ENCODE measurements at regions of chr2 and their contacts with region 1.

Region 1: GRCh38 chr2:85826990-85827878 is 61.6 kb downstream of the ST3GAL5 start:
- DNase-seq: peak; percentile 90
- ATAC-seq: peak; percentile 93
- H3K4me3 Mint-ChIP-seq: no peak overlapping the region
- H3K27ac Mint-ChIP-seq: peak overlapping the region; percentile 10
- H3K4me1 Mint-ChIP-seq: peaks cover 15% of the 10 kb centered on the region
- H3K27me3 Mint-ChIP-seq: no peaks in the 10 kb centered on the region

Region 2: DNA sequence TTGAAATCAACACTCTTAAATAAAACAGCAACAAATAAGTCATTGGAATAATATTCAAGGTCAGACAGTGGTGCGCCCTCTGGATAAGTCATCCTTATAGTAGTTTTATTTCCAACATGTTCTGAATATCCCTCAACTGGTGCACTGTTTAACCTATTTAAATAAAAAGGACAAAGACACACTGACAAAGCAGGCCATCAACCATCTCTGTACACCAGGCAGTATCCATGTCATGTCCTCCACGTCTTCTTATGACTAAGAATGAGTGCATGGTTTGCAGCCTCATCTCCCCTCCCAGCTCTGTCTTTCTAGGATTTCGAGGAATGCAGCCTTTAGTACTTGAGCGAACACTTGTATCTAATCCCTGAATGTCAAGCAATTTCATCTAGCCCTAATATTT is 19.2 kb after region 1 on chr2:
- CTCF ChIA-PET with region 1: interaction called, 14 read pairs
- POLR2A ChIA-PET with region 1: no interaction called
- intact Hi-C with region 1: no loop called
- DNase-seq: no peak
- ATAC-seq: no peak
- H3K4me3 Mint-ChIP-seq: no peak overlapping the region
- H3K27ac Mint-ChIP-seq: no peak overlapping the region
- H3K4me1 Mint-ChIP-seq: peaks cover 10% of the 10 kb centered on the region
- H3K27me3 Mint-ChIP-seq: no peaks in the 10 kb centered on the region

Region 3: GRCh38 chr2:85865539-85866164 is 38.4 kb after region 1 on chr2:
- CTCF ChIA-PET with region 1: interaction called, 8 read pairs
- POLR2A ChIA-PET with region 1: no interaction called
- intact Hi-C with region 1: loop called in 1 of 2 experiments (anchors 5 kb)
- DNase-seq: peak; percentile 61
- ATAC-seq: peak; percentile 89
- H3K4me3 Mint-ChIP-seq: no peak overlapping the region
- H3K27ac Mint-ChIP-seq: no peak overlapping the region
- H3K4me1 Mint-ChIP-seq: peaks cover 54% of the 10 kb centered on the region
- H3K27me3 Mint-ChIP-seq: no peaks in the 10 kb centered on the region

Region 4: GRCh38 chr2:86035883-86036668 is 208.8 kb after region 1 on chr2:
- CTCF ChIA-PET with region 1: interaction called, 26 read pairs
- POLR2A ChIA-PET with region 1: no interaction called
- intact Hi-C with region 1: loop called (anchors 1 kb)
- DNase-seq: peak; percentile 77
- ATAC-seq: peak; percentile 37
- H3K4me3 Mint-ChIP-seq: peak overlapping the region; percentile 10
- H3K27ac Mint-ChIP-seq: peak overlapping the region; percentile 97
- H3K4me1 Mint-ChIP-seq: peaks cover 70% of the 10 kb centered on the region
- H3K27me3 Mint-ChIP-seq: no peaks in the 10 kb centered on the region

Region 5: GRCh38 chr2:86079981-86080911 is 253.0 kb after region 1 on chr2:
- CTCF ChIA-PET with region 1: interaction called, 73 read pairs
- POLR2A ChIA-PET with region 1: interaction called, 5 read pairs
- intact Hi-C with region 1: loop called (anchors 1 kb)
- DNase-seq: peak; percentile 91
- ATAC-seq: peak; percentile 88
- H3K4me3 Mint-ChIP-seq: no peak overlapping the region
- H3K27ac Mint-ChIP-seq: peak overlapping the region; percentile 35
- H3K4me1 Mint-ChIP-seq: peaks cover 17% of the 10 kb centered on the region
- H3K27me3 Mint-ChIP-seq: no peaks in the 10 kb centered on the region